ENCODE measurements at regions of chr19 and their contacts with region 1.

Region 1: DNA sequence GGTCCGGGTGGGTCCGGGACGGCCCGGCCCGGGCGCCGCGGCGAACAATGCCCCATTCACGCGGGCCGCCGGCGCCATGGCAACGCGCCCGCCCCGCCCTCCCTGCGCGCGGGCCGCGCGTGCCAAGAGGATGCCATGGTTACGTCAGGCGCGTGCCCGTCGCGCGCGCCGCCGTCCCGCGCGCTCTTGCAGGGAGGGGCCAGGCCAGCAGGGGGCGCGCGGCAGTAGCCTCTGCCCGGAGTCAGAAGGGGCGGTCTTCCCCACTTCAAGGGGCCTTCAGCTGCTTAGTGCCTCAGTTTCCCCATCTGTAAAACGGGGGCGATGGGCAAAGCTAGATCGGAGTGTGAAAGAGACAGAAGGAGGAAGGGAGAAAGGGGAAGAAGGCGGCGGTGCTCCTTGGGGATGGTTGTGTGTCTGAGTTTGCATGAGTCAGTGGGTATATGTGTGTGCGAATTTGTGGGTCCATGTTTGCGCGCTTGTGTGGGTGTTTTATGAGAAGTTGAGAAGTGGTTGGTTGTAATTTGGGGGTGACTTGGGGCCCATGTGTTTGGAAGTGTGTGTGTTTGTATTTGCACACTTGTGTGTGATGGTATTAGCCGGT is 11.6 kb upstream of the NFIX start:
- DNase-seq: peak; percentile 85
- H3K4me3 ChIP-seq: peak overlapping the region; percentile 48
- H3K27ac ChIP-seq: no peak overlapping the region
- H3K4me1 ChIP-seq: peaks cover 6% of the 10 kb centered on the region
- H3K27me3 ChIP-seq: no peaks in the 10 kb centered on the region
- CTCF ChIP-seq: peak; percentile 87

Region 2: DNA sequence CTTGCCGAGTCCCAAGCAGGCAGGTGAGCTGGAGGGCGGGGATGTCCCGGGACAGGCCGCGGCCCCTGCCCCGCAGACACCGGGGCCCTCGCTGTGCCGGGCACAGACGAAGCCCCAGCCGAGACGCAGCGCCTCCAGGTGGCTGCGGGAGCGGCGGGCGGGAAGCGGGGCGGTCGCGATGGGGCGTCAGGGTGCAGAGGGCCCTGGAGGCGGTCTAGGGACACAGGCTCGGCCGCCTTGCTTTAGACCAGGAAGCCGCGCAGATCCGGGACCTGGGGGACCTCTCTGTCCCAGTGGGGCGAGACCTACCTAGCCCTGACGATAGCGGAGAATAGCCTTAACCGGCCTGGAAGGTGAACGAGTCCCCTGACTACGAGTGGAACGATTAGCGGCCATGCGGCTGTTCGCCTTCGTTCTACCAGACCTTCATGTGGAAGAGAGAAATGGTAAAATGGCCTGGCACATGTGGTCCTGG is 428.1 kb before region 1 on chr19:
- CTCF ChIA-PET with region 1: no interaction called
- POLR2A ChIA-PET with region 1: no interaction called
- intact Hi-C with region 1: no loop called
- DNase-seq: no peak
- H3K4me3 ChIP-seq: no peak overlapping the region
- H3K27ac ChIP-seq: no peak overlapping the region
- H3K4me1 ChIP-seq: no peaks in the 10 kb centered on the region
- H3K27me3 ChIP-seq: no peaks in the 10 kb centered on the region
- CTCF ChIP-seq: no peak

Region 3: GRCh38 chr19:12938234-12939025 is 45.2 kb before region 1 on chr19 and contains the start of gene CALR:
- CTCF ChIA-PET with region 1: no interaction called
- POLR2A ChIA-PET with region 1: no interaction called
- intact Hi-C with region 1: no loop called
- DNase-seq: peak; percentile 100
- H3K4me3 ChIP-seq: peak within 1 kb of the TSS; percentile 91
- H3K27ac ChIP-seq: peak within 1 kb of the TSS; percentile 95
- H3K4me1 ChIP-seq: peaks cover 32% of the 10 kb centered on the region
- H3K27me3 ChIP-seq: no peaks in the 10 kb centered on the region
- CTCF ChIP-seq: 0 out of 2 replicates have a peak, but pooled peaks have one; percentile 18
- total RNA-seq, gene CALR: 994 and 1,019 TPM in 2 replicates

Region 4: DNA sequence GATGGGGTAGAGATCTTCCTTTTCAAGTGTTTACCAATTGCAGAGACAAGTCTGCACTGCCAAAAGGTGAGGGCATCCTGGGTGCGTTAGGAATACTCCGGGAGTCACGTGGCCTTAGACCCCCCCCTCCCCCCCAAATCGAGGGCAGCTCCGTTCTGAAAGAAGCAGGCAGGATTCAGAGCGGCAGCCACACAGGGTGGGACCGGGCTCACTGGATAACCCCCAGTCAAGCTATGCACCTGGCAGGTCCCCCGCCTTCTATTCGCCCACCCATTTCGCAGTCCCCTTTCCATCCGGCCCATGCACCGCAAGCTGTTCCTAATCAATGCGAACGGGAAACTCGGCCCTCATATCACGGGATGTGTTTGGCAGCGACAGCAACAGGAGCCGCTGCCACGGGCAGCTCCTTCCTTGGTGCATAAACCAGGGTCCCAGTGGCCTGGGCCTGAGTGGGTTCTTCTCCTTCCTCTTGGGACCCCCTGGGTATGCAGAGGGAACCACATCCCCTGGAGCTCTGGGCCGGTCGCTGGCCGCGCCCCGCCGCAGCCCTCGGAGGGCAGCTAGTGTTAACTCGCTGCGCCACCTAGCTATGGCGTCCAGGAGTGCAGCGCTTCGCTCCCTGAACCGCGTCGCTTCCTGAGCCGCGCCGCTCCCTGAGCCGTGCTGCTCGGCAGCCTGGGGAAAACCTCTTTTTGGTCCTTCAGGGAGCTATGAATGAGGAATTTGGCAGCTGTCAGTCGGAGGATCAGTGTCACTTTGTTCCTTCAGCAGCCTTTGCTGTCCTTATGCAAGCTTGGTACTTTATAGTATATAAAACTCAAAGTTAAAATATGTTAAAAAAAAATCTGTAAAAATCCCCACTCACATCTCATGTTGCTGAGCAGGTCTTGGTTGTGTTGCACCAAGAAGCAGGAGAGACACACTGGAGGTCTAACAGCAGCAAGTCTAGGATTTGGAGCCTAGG is 77.6 kb after region 1 on chr19:
- CTCF ChIA-PET with region 1: interaction called, 14 read pairs
- POLR2A ChIA-PET with region 1: no interaction called
- intact Hi-C with region 1: loop called (anchors 1 kb)
- DNase-seq: peak; percentile 85
- H3K4me3 ChIP-seq: peak overlapping the region; percentile 43
- H3K27ac ChIP-seq: no peak overlapping the region
- H3K4me1 ChIP-seq: peaks cover 45% of the 10 kb centered on the region
- H3K27me3 ChIP-seq: no peaks in the 10 kb centered on the region
- CTCF ChIP-seq: peak; percentile 98

Region 5: DNA sequence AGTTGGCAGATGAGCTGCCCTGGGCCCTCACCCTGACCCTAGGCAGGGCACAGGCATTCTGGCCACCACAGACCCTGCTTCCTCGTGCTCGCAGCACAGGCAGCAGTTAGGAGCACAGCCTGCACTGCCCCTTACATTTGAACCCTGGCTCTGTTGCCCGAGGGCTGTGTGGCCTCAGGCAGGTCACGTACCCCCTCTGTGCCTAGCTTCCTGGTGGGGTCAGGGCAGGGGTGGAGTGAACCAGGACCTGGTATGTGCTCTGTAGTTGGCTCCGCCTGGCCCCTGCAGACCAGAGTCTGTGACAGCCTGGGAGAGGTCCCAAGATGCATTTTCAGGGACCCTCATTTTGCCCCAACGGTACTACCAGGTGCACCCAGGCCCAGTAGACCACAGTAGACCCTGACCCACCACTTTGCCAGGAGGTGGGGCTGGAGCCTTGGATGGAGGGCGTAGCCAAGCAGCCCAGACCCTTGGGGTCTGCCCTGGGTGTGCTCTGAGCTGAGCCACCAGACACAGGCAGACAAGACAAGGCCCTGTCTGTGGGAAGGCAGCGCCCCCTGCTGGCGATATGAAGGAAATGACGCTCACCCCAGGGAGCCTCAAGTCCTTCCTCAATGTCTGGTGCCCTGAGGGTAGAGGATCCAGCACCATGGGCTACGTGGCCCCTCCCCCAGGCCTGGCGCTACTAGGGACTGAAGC is 109.9 kb after region 1 on chr19:
- CTCF ChIA-PET with region 1: interaction called, 39 read pairs
- POLR2A ChIA-PET with region 1: no interaction called
- intact Hi-C with region 1: loop called (anchors 1 kb)
- DNase-seq: peak; percentile 93
- H3K4me3 ChIP-seq: no peak overlapping the region
- H3K27ac ChIP-seq: peak overlapping the region; percentile 35
- H3K4me1 ChIP-seq: peaks cover 44% of the 10 kb centered on the region
- H3K27me3 ChIP-seq: no peaks in the 10 kb centered on the region
- CTCF ChIP-seq: peak; percentile 96

Measured in A673 (cell line).